ENCODE measurements at regions of chr7 and their contacts with region 1.

Region 1: GRCh38 chr7:25565949-25566348 is 337.7 kb upstream of the NPVF start:
- DNase-seq: peak; percentile 37 to 77 (median 66)
- ATAC-seq: peak; percentile 85
- H3K4me3 ChIP-seq: no peak overlapping the region
- H3K4me3 Mint-ChIP-seq: peak overlapping the region in 4 of 10 donors; percentile 4 to 67 (median 45)
- H3K27ac ChIP-seq: no peak overlapping the region
- H3K27ac Mint-ChIP-seq: peak overlapping the region in 2 of 9 donors; percentile 8 to 25
- H3K4me1 ChIP-seq: no peaks in the 10 kb centered on the region
- H3K4me1 Mint-ChIP-seq: peaks cover 0 to 7% (median 7%) of the 10 kb centered on the region in 7 donors
- H3K27me3 ChIP-seq: no peaks in the 10 kb centered on the region
- H3K27me3 Mint-ChIP-seq: peaks cover 0 to 7% (median 0%) of the 10 kb centered on the region in 5 donors

Region 2: GRCh38 chr7:25148772-25149575 is 417.0 kb before region 1 on chr7:
- CTCF ChIA-PET with region 1: no interaction called
- POLR2A ChIA-PET with region 1: no interaction called
- intact Hi-C with region 1: no loop called
- DNase-seq: no peak
- ATAC-seq: no peak
- H3K4me3 ChIP-seq: no peak overlapping the region
- H3K4me3 Mint-ChIP-seq: no peak overlapping the region
- H3K27ac ChIP-seq: no peak overlapping the region
- H3K27ac Mint-ChIP-seq: peak overlapping the region in 1 of 9 donors; percentile 48
- H3K4me1 ChIP-seq: no peaks in the 10 kb centered on the region
- H3K4me1 Mint-ChIP-seq: peaks cover 0 to 8% (median 0%) of the 10 kb centered on the region in 7 donors
- H3K27me3 ChIP-seq: no peaks in the 10 kb centered on the region
- H3K27me3 Mint-ChIP-seq: no peaks in the 10 kb centered on the region

Region 3: DNA sequence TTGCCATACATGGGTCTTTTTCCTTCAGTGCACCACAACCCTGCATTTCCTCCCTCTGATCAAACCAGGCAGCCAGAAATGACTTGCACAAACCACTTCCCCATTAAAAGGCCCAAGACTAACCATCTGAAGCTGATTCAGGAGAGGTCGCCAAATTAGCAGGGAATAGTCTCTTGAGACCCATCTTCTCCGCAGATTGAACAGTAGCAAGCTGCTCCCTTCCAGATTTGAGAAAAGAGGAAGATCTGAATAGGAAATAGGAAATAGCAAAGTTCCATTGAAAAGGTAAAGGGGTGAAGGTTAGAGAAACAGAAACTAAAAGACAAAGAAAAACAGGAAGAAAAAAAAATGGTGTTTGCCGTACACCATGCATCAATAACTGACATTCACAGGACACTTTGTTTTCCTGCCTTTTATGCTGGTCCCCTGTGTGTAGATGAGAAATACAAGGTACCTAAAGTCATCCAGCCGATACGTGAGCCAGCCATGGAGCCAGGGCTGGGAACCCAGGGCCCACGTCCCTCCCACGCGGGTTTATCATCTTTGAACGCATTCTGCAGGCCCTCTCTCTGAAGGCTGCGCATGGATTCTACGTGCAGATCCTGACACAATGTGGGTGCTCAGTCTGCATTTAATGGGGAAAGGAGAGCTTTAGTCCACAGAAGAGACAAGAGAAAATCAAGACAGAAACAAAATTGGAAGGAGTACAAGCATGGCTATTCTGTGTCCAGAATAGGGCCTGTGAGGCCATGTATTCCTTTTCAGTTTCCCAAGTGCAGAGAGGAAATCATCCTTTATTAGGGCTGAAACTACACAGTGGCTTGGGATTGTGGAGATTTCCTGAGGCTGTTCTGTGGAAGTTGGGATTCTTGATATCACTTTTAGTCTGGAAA is 69.2 kb before region 1 on chr7:
- CTCF ChIA-PET with region 1: interaction called, 8 read pairs
- POLR2A ChIA-PET with region 1: interaction called, 4 read pairs
- intact Hi-C with region 1: loop called (anchors 1 to 5 kb)
- DNase-seq: peak in 6 of 9 donors; percentile 9 to 40 (median 35)
- ATAC-seq: peak; percentile 80
- H3K4me3 ChIP-seq: peak overlapping the region; percentile 24
- H3K4me3 Mint-ChIP-seq: peak overlapping the region; percentile 53 to 92 (median 84)
- H3K27ac ChIP-seq: peak overlapping the region; percentile 60
- H3K27ac Mint-ChIP-seq: peak overlapping the region; percentile 83 to 97 (median 92)
- H3K4me1 ChIP-seq: peaks cover 0 to 15% of the 10 kb centered on the region in 2 donors
- H3K4me1 Mint-ChIP-seq: peaks cover 7 to 23% (median 18%) of the 10 kb centered on the region in 7 donors
- H3K27me3 ChIP-seq: no peaks in the 10 kb centered on the region
- H3K27me3 Mint-ChIP-seq: peaks cover 0 to 3% (median 0%) of the 10 kb centered on the region in 5 donors

Region 4: GRCh38 chr7:25851332-25852210 is 285.6 kb after region 1 on chr7:
- CTCF ChIA-PET with region 1: interaction called, 3 read pairs
- POLR2A ChIA-PET with region 1: no interaction called
- intact Hi-C with region 1: loop called (anchors 1 kb)
- DNase-seq: peak in 8 of 9 donors; percentile 43 to 69 (median 62)
- ATAC-seq: peak; percentile 84
- H3K4me3 ChIP-seq: no peak overlapping the region
- H3K4me3 Mint-ChIP-seq: peak overlapping the region; percentile 16 to 85 (median 76)
- H3K27ac ChIP-seq: no peak overlapping the region
- H3K27ac Mint-ChIP-seq: peak overlapping the region in 7 of 9 donors; percentile 5 to 79 (median 74)
- H3K4me1 ChIP-seq: peaks cover 3 to 9% of the 10 kb centered on the region in 2 donors
- H3K4me1 Mint-ChIP-seq: peaks cover 4 to 27% (median 19%) of the 10 kb centered on the region in 7 donors
- H3K27me3 ChIP-seq: peaks cover 29 to 50% of the 10 kb centered on the region in 2 donors
- H3K27me3 Mint-ChIP-seq: peaks cover 43 to 63% (median 59%) of the 10 kb centered on the region in 5 donors